ENCODE measurements at regions of chr2 and their contacts with region 1.

Region 1: DNA sequence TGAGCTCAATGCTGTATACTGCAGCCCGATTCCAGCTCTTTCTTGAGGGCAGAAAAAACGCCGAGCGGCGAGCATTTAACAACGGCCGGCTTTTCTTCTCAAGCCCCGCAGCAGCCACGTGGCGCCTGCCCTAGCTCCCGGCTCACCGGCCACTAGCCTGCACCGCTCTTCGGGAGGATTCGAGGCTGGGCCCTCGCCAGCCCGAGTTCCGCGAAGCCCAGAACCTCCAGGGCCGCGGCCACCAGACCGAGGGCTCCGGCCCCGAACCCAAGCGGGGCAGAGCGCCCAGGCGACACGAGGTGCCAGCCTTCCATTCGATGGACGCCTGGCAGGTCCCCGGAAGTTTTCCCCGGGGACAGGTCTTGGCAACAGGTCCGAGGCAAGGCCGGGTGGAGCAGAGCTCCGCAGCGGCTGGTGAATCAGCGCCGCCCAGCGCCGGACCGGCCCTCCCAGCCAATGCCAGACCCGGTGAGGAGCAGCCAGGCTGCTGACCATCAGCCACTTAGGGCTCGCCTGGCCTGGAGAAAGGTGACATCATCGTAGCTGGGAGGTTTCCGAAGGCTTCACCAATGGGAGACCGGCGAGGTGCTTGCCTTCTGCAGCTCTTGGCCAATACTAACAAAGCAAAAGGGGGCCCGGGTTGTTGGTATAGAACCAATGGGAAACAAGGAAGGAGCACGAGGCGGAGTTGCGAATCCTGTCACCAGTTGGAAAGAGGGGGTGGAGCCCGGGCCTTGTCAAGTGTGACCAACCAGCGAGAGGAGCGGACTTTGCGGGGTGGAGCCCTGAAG is 544 bp upstream of the MXD1 start:
- DNase-seq: peak; percentile 100
- ATAC-seq: peak; percentile 92
- H3K4me3 ChIP-seq: peak overlapping the region; percentile 56 to 69 (median 58)
- H3K27ac ChIP-seq: peak overlapping the region; percentile 89
- H3K4me1 ChIP-seq: peaks cover 37% of the 10 kb centered on the region
- H3K27me3 ChIP-seq: no peaks in the 10 kb centered on the region
- CTCF ChIP-seq: peak; percentile 96
- EP300 ChIP-seq: peak in 1 of 2 experiments; percentile 19; a peak in 2 of 4 replicates
- POLR2A ChIP-seq: peak; percentile 90 to 94
- RAD21 ChIP-seq: peak; percentile 91

Region 2: GRCh38 chr2:69741619-69742466 is 172.5 kb before region 1 on chr2 and contains the start of gene ANXA4:
- CTCF ChIA-PET with region 1: no interaction called
- POLR2A ChIA-PET with region 1: interaction called, 10 read pairs
- in situ Hi-C with region 1: no loop called
- intact Hi-C with region 1: no loop called
- DNase-seq: peak; percentile 90
- ATAC-seq: peak; percentile 90
- H3K4me3 ChIP-seq: peak within 1 kb of the TSS; percentile 77 to 83 (median 79)
- H3K27ac ChIP-seq: peak within 1 kb of the TSS; percentile 94
- H3K4me1 ChIP-seq: peaks cover 56% of the 10 kb centered on the region
- H3K27me3 ChIP-seq: no peaks in the 10 kb centered on the region; a peak in 1 of 5 replicates
- CTCF ChIP-seq: no peak; the same call in 1 of the 2 replicates
- EP300 ChIP-seq: peak in 1 of 2 experiments; percentile 23; a peak in 1 of 4 replicates
- POLR2A ChIP-seq: peak; percentile 85 to 92
- RAD21 ChIP-seq: peak; percentile 11; the same call in 1 of the 2 replicates
- total RNA-seq, gene ANXA4: 155 and 237 TPM in 2 replicates

Region 3: DNA sequence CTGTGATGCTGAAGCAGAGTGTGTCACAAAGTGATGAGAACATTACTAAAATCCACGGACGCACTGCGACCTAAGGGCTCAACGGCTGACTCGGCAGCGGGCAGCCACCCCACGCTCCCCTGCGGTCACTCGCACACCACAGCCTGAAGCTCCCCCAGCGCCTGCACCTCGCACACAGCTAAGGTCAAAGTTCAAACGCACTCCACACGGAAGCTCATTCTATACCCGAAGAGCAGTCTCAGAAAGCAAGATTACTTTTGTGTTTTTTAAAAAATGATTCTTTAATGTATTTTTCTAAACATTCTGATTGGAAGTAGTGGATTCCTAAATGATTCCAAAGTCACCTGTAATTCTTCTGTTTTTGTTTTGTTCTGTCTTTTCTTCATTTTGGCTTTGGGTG is 25.4 kb after region 1 on chr2:
- CTCF ChIA-PET with region 1: no interaction called
- POLR2A ChIA-PET with region 1: interaction called, 104 read pairs
- in situ Hi-C with region 1: no loop called
- intact Hi-C with region 1: no loop called
- DNase-seq: peak; percentile 39
- ATAC-seq: peak; percentile 67
- H3K4me3 ChIP-seq: no peak overlapping the region
- H3K27ac ChIP-seq: no peak overlapping the region
- H3K4me1 ChIP-seq: peaks cover 21% of the 10 kb centered on the region
- H3K27me3 ChIP-seq: no peaks in the 10 kb centered on the region
- CTCF ChIP-seq: no peak
- EP300 ChIP-seq: no peak
- POLR2A ChIP-seq: no peak
- RAD21 ChIP-seq: no peak

Region 4: DNA sequence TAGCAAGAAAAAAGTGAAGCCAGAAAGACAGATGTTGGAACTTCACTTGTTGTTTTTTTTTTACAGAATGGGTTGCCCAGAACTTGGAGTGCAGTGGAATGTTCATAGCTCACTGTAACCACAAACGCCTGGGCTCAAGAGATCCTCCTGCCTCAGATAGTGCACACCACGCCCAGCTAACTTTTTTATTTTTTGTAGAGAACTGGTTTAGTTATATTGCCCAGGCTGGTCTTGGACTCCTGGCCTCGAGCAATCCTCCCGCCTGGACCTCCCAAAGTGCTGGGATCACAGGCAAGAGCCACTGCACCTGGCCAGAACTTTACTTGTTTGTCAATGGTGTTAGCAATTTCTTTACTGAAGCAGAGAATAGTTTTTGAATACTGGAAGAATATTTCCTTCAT is 59.0 kb after region 1 on chr2:
- CTCF ChIA-PET with region 1: no interaction called
- POLR2A ChIA-PET with region 1: interaction called, 25 read pairs
- in situ Hi-C with region 1: no loop called
- intact Hi-C with region 1: loop called (anchors 5 kb)
- DNase-seq: no peak
- ATAC-seq: no peak
- H3K4me3 ChIP-seq: no peak overlapping the region
- H3K27ac ChIP-seq: no peak overlapping the region
- H3K4me1 ChIP-seq: peaks cover 58% of the 10 kb centered on the region
- H3K27me3 ChIP-seq: no peaks in the 10 kb centered on the region
- CTCF ChIP-seq: no peak
- EP300 ChIP-seq: no peak
- POLR2A ChIP-seq: no peak
- RAD21 ChIP-seq: no peak

Region 5: GRCh38 chr2:70070541-70071268 is 156.3 kb after region 1 on chr2:
- CTCF ChIA-PET with region 1: interaction called, 22 read pairs
- POLR2A ChIA-PET with region 1: interaction called, 282 read pairs
- in situ Hi-C with region 1: loop called (anchors 5 kb)
- intact Hi-C with region 1: loop called (anchors 1 kb)
- DNase-seq: peak; percentile 87
- ATAC-seq: peak; percentile 90
- H3K4me3 ChIP-seq: no peak overlapping the region
- H3K27ac ChIP-seq: peak overlapping the region; percentile 41
- H3K4me1 ChIP-seq: peaks cover 36% of the 10 kb centered on the region
- H3K27me3 ChIP-seq: no peaks in the 10 kb centered on the region
- CTCF ChIP-seq: peak; percentile 91
- EP300 ChIP-seq: no peak
- POLR2A ChIP-seq: no peak
- RAD21 ChIP-seq: peak; percentile 85

Region 6: GRCh38 chr2:70132244-70133126 is 218.1 kb after region 1 on chr2:
- CTCF ChIA-PET with region 1: no interaction called
- POLR2A ChIA-PET with region 1: interaction called, 26 read pairs
- in situ Hi-C with region 1: no loop called
- intact Hi-C with region 1: no loop called
- DNase-seq: peak; percentile 86
- ATAC-seq: peak; percentile 83
- H3K4me3 ChIP-seq: peak overlapping the region; percentile 53 to 74 (median 73)
- H3K27ac ChIP-seq: peak overlapping the region; percentile 86
- H3K4me1 ChIP-seq: peaks cover 68% of the 10 kb centered on the region
- H3K27me3 ChIP-seq: no peaks in the 10 kb centered on the region
- CTCF ChIP-seq: no peak
- EP300 ChIP-seq: no peak; a peak in 1 of 4 replicates
- POLR2A ChIP-seq: peak; percentile 31 to 83; a peak in 3 of 4 replicates
- RAD21 ChIP-seq: 0 out of 2 replicates have a peak, but pooled peaks have one; percentile 21

Region 7: DNA sequence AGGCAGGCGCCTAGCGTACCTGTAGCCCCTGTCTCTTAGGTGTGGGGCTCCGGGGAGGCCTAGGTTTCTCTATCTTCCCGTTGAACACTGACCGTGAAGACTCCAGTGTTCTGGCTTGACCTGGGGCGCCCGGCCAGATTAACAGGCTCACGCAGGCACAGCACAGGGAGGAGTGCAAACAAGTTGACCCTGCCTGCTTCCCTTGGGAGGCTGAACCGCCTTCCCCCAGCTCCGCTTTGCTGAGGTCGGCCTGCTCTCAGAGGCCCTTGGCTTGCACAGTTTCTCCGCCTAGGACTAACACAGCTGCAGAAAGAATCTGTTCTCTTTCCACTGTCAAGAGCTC is 344.1 kb after region 1 on chr2:
- CTCF ChIA-PET with region 1: no interaction called
- POLR2A ChIA-PET with region 1: interaction called, 25 read pairs
- in situ Hi-C with region 1: no loop called
- intact Hi-C with region 1: no loop called
- DNase-seq: peak; percentile 41
- ATAC-seq: peak; percentile 70
- H3K4me3 ChIP-seq: peak overlapping the region; percentile 83 to 90 (median 83)
- H3K27ac ChIP-seq: peak overlapping the region; percentile 82
- H3K4me1 ChIP-seq: peaks cover 44% of the 10 kb centered on the region
- H3K27me3 ChIP-seq: no peaks in the 10 kb centered on the region; a peak in 1 of 5 replicates
- CTCF ChIP-seq: no peak
- EP300 ChIP-seq: no peak
- POLR2A ChIP-seq: no peak
- RAD21 ChIP-seq: no peak

Measured in HepG2 (cell line).